ENCODE measurements at regions of chr1 and their contacts with region 1.

Region 1: DNA sequence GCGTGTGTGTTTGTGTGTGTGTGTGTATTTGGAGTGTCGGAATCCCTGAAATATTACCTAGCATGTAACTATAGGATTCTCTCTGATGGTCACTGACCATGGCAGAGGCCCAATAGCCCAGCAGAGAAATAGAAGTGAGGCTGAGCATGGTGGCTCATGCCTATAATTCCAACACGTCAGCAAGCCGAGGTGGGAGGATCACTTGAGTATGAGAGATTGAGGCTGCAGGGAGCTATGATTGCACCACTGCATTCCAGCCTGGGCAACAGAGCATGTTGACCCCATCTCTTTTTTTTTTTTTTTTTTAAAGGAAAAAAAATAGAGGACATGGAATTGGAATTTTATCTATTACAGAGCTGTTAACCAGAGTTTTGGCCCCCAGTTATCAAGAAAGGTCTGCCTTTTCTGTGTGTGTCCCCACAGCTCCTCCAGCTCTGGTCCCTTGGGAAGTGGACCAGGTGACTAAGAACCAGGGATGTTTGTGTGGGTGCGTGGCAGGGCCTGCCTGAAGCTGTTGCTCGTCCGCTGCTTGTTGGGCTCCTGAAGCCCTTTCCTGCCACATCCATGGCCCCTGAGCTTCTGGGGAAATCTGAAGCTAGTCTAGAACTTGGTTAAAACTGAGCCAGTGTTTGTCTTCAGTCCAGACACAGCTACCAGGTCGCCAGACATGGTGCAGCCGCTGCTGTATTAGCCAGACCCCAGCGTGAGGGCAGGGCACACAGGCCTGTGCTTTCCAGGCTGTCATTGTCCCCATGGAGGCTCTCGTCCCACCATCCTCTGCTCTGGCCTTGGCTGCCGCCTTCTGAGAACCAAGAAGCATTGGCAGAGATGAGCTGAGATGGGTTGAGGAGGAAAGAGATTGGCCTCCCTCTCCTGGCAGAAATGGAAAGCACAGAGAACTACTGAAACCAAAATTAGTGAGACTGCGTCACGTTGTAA is 25.5 kb downstream of the CAPN9 start:
- DNase-seq: peak; percentile 18 to 39
- ATAC-seq: peak; percentile 76 to 90
- H3K4me3 ChIP-seq: peak overlapping the region in 1 of 4 donors; percentile 9
- H3K27ac ChIP-seq: no peak overlapping the region
- H3K4me1 ChIP-seq: no peaks in the 10 kb centered on the region
- H3K27me3 ChIP-seq: no peaks in the 10 kb centered on the region
- CTCF ChIP-seq: peak; percentile 45 to 69 (median 63)
- POLR2A ChIP-seq: no peak

Region 2: DNA sequence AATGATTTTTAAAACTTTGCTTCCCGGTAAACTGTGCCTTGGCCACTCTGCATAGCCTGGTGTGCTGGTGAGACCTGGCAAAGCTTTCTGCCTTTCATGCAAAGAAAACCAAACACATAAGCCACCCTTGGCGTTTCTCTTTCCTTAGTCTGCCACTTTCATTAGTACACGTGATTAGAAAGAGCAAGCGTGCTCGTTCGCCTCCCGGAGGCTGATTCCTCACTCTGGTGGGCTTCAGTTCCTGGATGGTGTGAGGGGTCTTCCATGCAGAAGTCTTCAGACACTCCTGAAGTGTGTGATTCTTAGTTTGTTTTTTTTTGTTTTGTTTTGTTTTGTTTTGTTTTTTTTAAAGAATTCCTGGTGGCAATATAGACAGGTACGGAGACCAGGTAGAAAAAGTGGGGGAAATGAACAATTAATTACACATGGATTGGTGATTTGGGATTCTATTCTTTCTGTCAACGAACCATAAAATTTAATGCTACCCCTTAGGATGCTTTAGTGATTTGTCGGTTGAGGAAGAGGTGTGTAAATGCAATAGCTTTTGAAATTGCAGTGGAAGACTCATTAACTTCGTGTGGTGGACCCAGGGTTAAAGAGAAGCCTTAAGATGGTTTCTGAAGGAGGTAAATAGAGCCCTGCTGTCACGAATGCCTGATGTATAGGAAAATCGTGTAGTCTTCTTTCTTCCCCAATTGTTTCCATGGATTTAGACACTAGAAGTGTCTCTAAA is 703.6 kb before region 1 on chr1:
- in situ Hi-C with region 1: no loop called
- intact Hi-C with region 1: no loop called
- DNase-seq: no peak
- ATAC-seq: no peak
- H3K4me3 ChIP-seq: peak overlapping the region; percentile 73 to 88 (median 80)
- H3K27ac ChIP-seq: peak overlapping the region; percentile 90 to 97 (median 97)
- H3K4me1 ChIP-seq: peaks cover 64 to 66% of the 10 kb centered on the region in 2 donors
- H3K27me3 ChIP-seq: no peaks in the 10 kb centered on the region
- CTCF ChIP-seq: no peak
- POLR2A ChIP-seq: peak in 1 of 2 donors; percentile 42

Region 3: GRCh38 chr1:230632273-230632873 is 140.4 kb before region 1 on chr1:
- in situ Hi-C with region 1: loop called in 2 of 4 experiments (anchors 10 to 25 kb)
- intact Hi-C with region 1: no loop called
- DNase-seq: no peak
- ATAC-seq: no peak
- H3K4me3 ChIP-seq: no peak overlapping the region
- H3K27ac ChIP-seq: no peak overlapping the region
- H3K4me1 ChIP-seq: no peaks in the 10 kb centered on the region
- H3K27me3 ChIP-seq: no peaks in the 10 kb centered on the region
- CTCF ChIP-seq: no peak
- POLR2A ChIP-seq: no peak

Region 4: GRCh38 chr1:230642263-230642959 is 130.3 kb before region 1 on chr1 and contains the start of gene COG2:
- in situ Hi-C with region 1: loop called in 2 of 4 experiments (anchors 10 to 25 kb)
- intact Hi-C with region 1: loop called (anchors 1 kb)
- DNase-seq: peak; percentile 87 to 91
- ATAC-seq: peak; percentile 96 to 97
- H3K4me3 ChIP-seq: peak within 1 kb of the TSS; percentile 77 to 89 (median 78)
- H3K27ac ChIP-seq: peak within 1 kb of the TSS; percentile 85 to 94 (median 87)
- H3K4me1 ChIP-seq: peaks cover 21 to 24% of the 10 kb centered on the region in 2 donors
- H3K27me3 ChIP-seq: no peaks in the 10 kb centered on the region
- CTCF ChIP-seq: peak; percentile 98 to 100 (median 99)
- POLR2A ChIP-seq: peak; percentile 60 to 73
- total RNA-seq, gene COG2: 21.5 to 46.5 (median 27.4) TPM

Region 5: GRCh38 chr1:230696722-230697437 is 75.8 kb before region 1 on chr1:
- in situ Hi-C with region 1: no loop called
- intact Hi-C with region 1: loop called (anchors 2 kb)
- DNase-seq: no peak
- ATAC-seq: peak; percentile 83
- H3K4me3 ChIP-seq: no peak overlapping the region
- H3K27ac ChIP-seq: no peak overlapping the region
- H3K4me1 ChIP-seq: peaks cover 0 to 7% of the 10 kb centered on the region in 2 donors
- H3K27me3 ChIP-seq: no peaks in the 10 kb centered on the region
- CTCF ChIP-seq: peak in 1 of 5 experiments; percentile 14
- POLR2A ChIP-seq: no peak

Region 6: GRCh38 chr1:230713915-230714764 is 58.6 kb before region 1 on chr1 and contains the start of gene AGT:
- in situ Hi-C with region 1: no loop called
- intact Hi-C with region 1: loop called (anchors 5 kb)
- DNase-seq: peak; percentile 86 to 88
- ATAC-seq: peak; percentile 93 to 97
- H3K4me3 ChIP-seq: peak within 1 kb of the TSS; percentile 54 to 62 (median 56)
- H3K27ac ChIP-seq: peak within 1 kb of the TSS; percentile 87 to 92 (median 90)
- H3K4me1 ChIP-seq: peaks cover 23 to 30% of the 10 kb centered on the region in 2 donors
- H3K27me3 ChIP-seq: no peaks in the 10 kb centered on the region
- CTCF ChIP-seq: no peak
- POLR2A ChIP-seq: peak; percentile 59 to 69
- total RNA-seq, gene AGT: 17.3 to 49.6 (median 34.5) TPM

Region 7: GRCh38 chr1:230849451-230850224 is 76.9 kb after region 1 on chr1:
- in situ Hi-C with region 1: no loop called
- intact Hi-C with region 1: no loop called
- DNase-seq: peak in 1 of 2 donors; percentile 61
- ATAC-seq: peak; percentile 40 to 58
- H3K4me3 ChIP-seq: peak overlapping the region in 1 of 4 donors; percentile 23
- H3K27ac ChIP-seq: peak overlapping the region; percentile 44 to 78 (median 70)
- H3K4me1 ChIP-seq: peaks cover 54 to 81% of the 10 kb centered on the region in 2 donors
- H3K27me3 ChIP-seq: no peaks in the 10 kb centered on the region
- CTCF ChIP-seq: no peak
- POLR2A ChIP-seq: no peak